ENCODE measurements at regions of chr1 and their contacts with region 1.

Region 1: DNA sequence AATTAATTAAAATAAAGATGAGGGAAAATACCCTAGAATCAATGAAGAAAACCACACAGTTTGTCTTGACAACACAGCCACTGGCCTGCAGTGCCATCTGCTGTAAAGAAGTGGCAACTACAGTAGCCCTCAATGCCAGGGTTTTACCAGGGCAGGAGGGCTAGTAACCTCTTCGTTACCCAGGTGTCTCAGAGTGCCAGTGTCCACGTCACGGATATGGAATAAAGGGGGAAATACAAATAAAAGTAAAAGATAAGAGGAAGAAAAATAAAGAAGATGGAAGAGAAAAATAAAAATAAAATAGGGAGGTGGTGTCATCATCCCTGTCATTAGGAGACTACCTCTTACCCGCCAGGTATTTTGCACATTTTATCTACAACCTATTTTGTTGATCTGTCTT is 14.2 kb upstream of the SLC44A3 start:
- DNase-seq: peak; percentile 64
- ATAC-seq: peak; percentile 43
- H3K4me3 Mint-ChIP-seq: no peak overlapping the region
- H3K27ac Mint-ChIP-seq: no peak overlapping the region
- H3K4me1 Mint-ChIP-seq: peaks cover 20% of the 10 kb centered on the region
- H3K27me3 Mint-ChIP-seq: peaks cover 15% of the 10 kb centered on the region

Region 2: GRCh38 chr1:94481473-94481933 is 324.4 kb before region 1 on chr1:
- CTCF ChIA-PET with region 1: interaction called, 47 read pairs
- DNase-seq: peak; percentile 51
- ATAC-seq: peak; percentile 84
- H3K4me3 Mint-ChIP-seq: no peak overlapping the region
- H3K27ac Mint-ChIP-seq: no peak overlapping the region
- H3K4me1 Mint-ChIP-seq: peaks cover 3% of the 10 kb centered on the region
- H3K27me3 Mint-ChIP-seq: no peaks in the 10 kb centered on the region

Region 3: GRCh38 chr1:94514095-94514727 is 291.7 kb before region 1 on chr1:
- CTCF ChIA-PET with region 1: interaction called, 14 read pairs
- DNase-seq: no peak
- ATAC-seq: no peak
- H3K4me3 Mint-ChIP-seq: no peak overlapping the region
- H3K27ac Mint-ChIP-seq: no peak overlapping the region
- H3K4me1 Mint-ChIP-seq: no peaks in the 10 kb centered on the region
- H3K27me3 Mint-ChIP-seq: no peaks in the 10 kb centered on the region

Measured in activated CD8-positive, alpha-beta memory T cell treated with anti-CD3 and anti-CD28 coated beads, Interleukin-2, amount 10 ng/mL, durations not matched to agents 7 days and 5 days (primary cell).